Activated B cell treated with CpG ODN at 0.5 μM for 24 hours (primary cell): ENCODE measurements at regions of chr7 and their contacts with region 1.

Region 1: DNA sequence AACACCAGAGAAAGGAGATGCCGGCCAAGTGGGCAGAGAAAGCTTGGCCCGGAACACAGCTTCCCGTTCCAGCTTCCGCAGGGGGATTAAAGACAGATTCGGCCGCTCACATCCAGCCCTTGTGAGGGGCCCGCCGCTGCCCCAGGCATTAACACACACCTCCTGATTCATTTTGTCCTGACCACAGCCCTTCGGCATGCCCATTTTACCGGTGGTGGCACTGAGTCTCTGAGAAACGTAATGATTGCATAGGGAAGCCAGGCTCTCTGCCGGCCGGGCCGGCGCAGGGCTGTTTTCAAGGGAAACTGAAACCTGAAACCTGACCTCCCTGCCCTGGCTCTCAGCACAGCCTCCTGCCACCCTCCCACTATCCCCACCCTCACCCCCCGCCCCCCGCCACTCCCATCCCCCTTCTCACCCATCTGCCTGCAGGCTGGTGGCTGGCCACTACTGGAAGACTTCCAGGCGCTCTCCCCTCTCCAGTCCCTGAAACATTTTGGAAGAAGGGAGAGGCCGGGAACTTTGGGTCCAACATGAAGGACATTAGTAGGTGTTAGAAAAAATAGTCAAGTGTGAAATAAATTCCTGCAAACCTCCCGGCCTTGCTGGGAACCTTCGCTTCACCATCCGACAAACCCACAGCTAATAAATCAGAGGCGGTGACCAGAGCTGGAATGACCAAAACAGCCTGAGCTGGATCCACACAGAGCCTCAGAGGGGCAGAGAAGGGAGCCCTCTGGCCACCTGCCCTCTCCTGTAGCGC is 83.5 kb upstream of the CUX1 start:
- DNase-seq: no peak
- ATAC-seq: no peak
- H3K4me3 Mint-ChIP-seq: peak overlapping the region; percentile 56
- H3K27ac Mint-ChIP-seq: no peak overlapping the region
- H3K4me1 Mint-ChIP-seq: peaks cover 5% of the 10 kb centered on the region
- H3K27me3 Mint-ChIP-seq: peaks cover 6% of the 10 kb centered on the region
- CTCF ChIP-seq: no peak

Region 2: DNA sequence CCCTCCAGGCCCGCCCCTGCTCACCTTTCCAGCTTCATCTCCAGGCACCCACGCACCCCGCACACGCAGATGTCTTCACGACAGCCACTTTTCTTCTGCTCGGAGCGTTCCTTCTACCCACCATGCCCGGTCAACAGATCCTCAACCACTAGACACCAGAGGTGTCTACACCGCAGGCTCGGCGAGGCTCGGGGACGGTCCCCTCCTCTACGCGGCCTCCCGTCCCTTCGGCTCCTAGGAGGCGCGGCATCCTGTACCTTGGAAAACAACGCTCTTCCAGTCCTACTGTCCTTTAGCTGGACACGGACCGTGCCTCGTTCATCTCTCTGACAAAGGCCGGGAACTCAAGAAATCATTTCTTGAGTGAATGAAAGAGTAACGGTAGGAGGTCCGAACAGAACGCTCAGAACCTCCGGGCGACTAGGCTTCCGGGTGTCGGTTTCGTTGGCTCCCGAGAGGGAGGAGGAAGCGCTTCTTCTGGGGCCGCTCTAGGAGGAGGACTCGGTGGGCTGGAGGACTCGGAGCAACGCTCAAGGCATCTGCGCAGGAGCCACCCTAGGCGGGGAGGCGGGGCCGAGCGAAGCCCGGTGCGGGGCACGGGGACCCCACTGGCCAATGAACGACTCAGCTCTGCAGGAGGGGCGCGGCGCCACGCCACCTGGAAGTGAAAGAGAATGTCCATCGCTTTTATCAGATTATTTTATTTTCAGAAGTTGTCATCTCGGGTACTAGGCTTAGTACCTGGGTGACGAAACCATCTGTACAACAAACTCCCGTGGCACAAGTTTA is 481.8 kb before region 1 on chr7:
- CTCF ChIA-PET with region 1: no interaction called
- POLR2A ChIA-PET with region 1: interaction called, 11 read pairs
- intact Hi-C with region 1: no loop called
- DNase-seq: peak; percentile 98
- ATAC-seq: peak; percentile 100
- H3K4me3 Mint-ChIP-seq: peak overlapping the region; percentile 100
- H3K27ac Mint-ChIP-seq: peak overlapping the region; percentile 96
- H3K4me1 Mint-ChIP-seq: peaks cover 29% of the 10 kb centered on the region
- H3K27me3 Mint-ChIP-seq: peaks cover 8% of the 10 kb centered on the region
- CTCF ChIP-seq: no peak